Kidney (tissue), 22 donors: ENCODE measurements at regions of chr4 and their contacts with region 1.

Region 1: GRCh38 chr4:88533937-88534750 is 10.6 kb upstream of the PYURF start:
- DNase-seq: peak in 1 of 5 donors; percentile 7
- H3K4me3 ChIP-seq: no peak overlapping the region
- H3K27ac ChIP-seq: no peak overlapping the region
- H3K4me1 ChIP-seq: no peaks in the 10 kb centered on the region
- H3K27me3 ChIP-seq: no peaks in the 10 kb centered on the region
- CTCF ChIP-seq: no peak

Region 2: GRCh38 chr4:88661739-88662138 is 127.6 kb after region 1 on chr4:
- intact Hi-C with region 1: loop called (anchors 10 kb)
- DNase-seq: no peak
- H3K4me3 ChIP-seq: no peak overlapping the region
- H3K27ac ChIP-seq: no peak overlapping the region
- H3K4me1 ChIP-seq: peaks cover 0 to 28% (median 7%) of the 10 kb centered on the region in 3 donors
- H3K27me3 ChIP-seq: no peaks in the 10 kb centered on the region
- CTCF ChIP-seq: no peak

Region 3: DNA sequence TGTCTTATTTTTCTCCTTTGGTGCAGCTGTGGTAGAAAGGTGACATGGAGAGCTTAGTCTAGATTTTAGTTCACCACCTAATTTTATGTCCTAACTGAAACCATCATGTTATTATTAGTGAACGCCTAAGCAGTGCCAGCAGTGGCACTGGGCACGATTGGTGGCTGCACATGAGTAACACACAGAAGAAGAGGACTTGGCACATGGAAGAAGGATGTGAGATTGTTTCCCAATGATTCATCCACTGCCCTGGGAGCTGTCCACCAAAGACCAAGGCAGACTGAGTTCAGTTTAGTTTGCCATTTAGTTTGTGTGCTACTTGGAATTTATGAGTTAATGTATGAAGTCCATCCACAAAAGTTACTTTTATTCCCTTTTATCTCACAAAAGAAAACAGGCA is 231.6 kb after region 1 on chr4:
- intact Hi-C with region 1: no loop called
- DNase-seq: no peak
- H3K4me3 ChIP-seq: no peak overlapping the region
- H3K27ac ChIP-seq: no peak overlapping the region
- H3K4me1 ChIP-seq: peaks cover 0 to 3% (median 0%) of the 10 kb centered on the region in 3 donors
- H3K27me3 ChIP-seq: no peaks in the 10 kb centered on the region
- CTCF ChIP-seq: no peak